ENCODE measurements at regions of chr17 and their contacts with region 1.

Region 1: GRCh38 chr17:28951991-28952975 is 965 bp upstream of the PHF12 start:
- DNase-seq: peak; percentile 89 to 100 (median 94)
- ATAC-seq: peak; percentile 71
- H3K4me3 ChIP-seq: peak overlapping the region; percentile 64
- H3K4me3 Mint-ChIP-seq: no peak overlapping the region
- H3K27ac ChIP-seq: peak overlapping the region; percentile 94 to 97
- H3K27ac Mint-ChIP-seq: no peak overlapping the region
- H3K4me1 ChIP-seq: peaks cover 34% of the 10 kb centered on the region
- H3K4me1 Mint-ChIP-seq: peaks cover 15% of the 10 kb centered on the region
- H3K27me3 ChIP-seq: no peaks in the 10 kb centered on the region
- H3K27me3 Mint-ChIP-seq: no peaks in the 10 kb centered on the region
- CTCF ChIP-seq: no peak

Region 2: GRCh38 chr17:28571255-28572122 is 380.8 kb before region 1 on chr17 and contains the start of gene PIGS:
- CTCF ChIA-PET with region 1: no interaction called
- POLR2A ChIA-PET with region 1: interaction called, 13 read pairs
- intact Hi-C with region 1: loop called in 1 of 2 experiments (anchors 10 kb)
- DNase-seq: peak; percentile 78 to 95 (median 88)
- ATAC-seq: peak; percentile 96
- H3K4me3 ChIP-seq: peak within 1 kb of the TSS; percentile 95
- H3K4me3 Mint-ChIP-seq: peak within 1 kb of the TSS; percentile 94
- H3K27ac ChIP-seq: peak within 1 kb of the TSS; percentile 66 to 85
- H3K27ac Mint-ChIP-seq: peak within 1 kb of the TSS; percentile 91
- H3K4me1 ChIP-seq: peaks cover 55% of the 10 kb centered on the region
- H3K4me1 Mint-ChIP-seq: peaks cover 65% of the 10 kb centered on the region
- H3K27me3 ChIP-seq: no peaks in the 10 kb centered on the region
- H3K27me3 Mint-ChIP-seq: no peaks in the 10 kb centered on the region
- CTCF ChIP-seq: no peak
- total RNA-seq, gene PIGS: 73.8 to 76.4 TPM

Region 3: GRCh38 chr17:28717578-28718333 is 234.5 kb before region 1 on chr17 and contains the start of gene RAB34:
- CTCF ChIA-PET with region 1: no interaction called
- POLR2A ChIA-PET with region 1: interaction called, 103 read pairs
- intact Hi-C with region 1: loop called in 1 of 2 experiments (anchors 2 kb)
- DNase-seq: peak in 6 of 14 experiments; percentile 12 to 60 (median 43)
- ATAC-seq: no peak
- H3K4me3 ChIP-seq: peak within 1 kb of the TSS; percentile 36
- H3K4me3 Mint-ChIP-seq: peak within 1 kb of the TSS; percentile 79
- H3K27ac ChIP-seq: no peak within 1 kb of the TSS
- H3K27ac Mint-ChIP-seq: peak within 1 kb of the TSS; percentile 79
- H3K4me1 ChIP-seq: peaks cover 55% of the 10 kb centered on the region
- H3K4me1 Mint-ChIP-seq: peaks cover 41% of the 10 kb centered on the region
- H3K27me3 ChIP-seq: peaks cover 17 to 21% of the 10 kb centered on the region in 2 experiments
- H3K27me3 Mint-ChIP-seq: peaks cover 35% of the 10 kb centered on the region
- CTCF ChIP-seq: no peak
- total RNA-seq, gene RAB34: 20.7 to 21.3 TPM

Region 4: GRCh38 chr17:28842282-28843012 is 109.8 kb before region 1 on chr17 and contains the start of gene FAM222B:
- CTCF ChIA-PET with region 1: interaction called, 5 read pairs
- POLR2A ChIA-PET with region 1: interaction called, 23 read pairs
- intact Hi-C with region 1: loop called in 1 of 2 experiments (anchors 5 kb)
- DNase-seq: peak; percentile 70 to 94 (median 83)
- ATAC-seq: peak; percentile 97
- H3K4me3 ChIP-seq: peak within 1 kb of the TSS; percentile 99
- H3K4me3 Mint-ChIP-seq: peak within 1 kb of the TSS; percentile 100
- H3K27ac ChIP-seq: peak within 1 kb of the TSS; percentile 78 to 80
- H3K27ac Mint-ChIP-seq: peak within 1 kb of the TSS; percentile 91
- H3K4me1 ChIP-seq: peaks cover 20% of the 10 kb centered on the region
- H3K4me1 Mint-ChIP-seq: peaks cover 27% of the 10 kb centered on the region
- H3K27me3 ChIP-seq: no peaks in the 10 kb centered on the region
- H3K27me3 Mint-ChIP-seq: no peaks in the 10 kb centered on the region
- CTCF ChIP-seq: no peak
- total RNA-seq, gene FAM222B: 17.3 to 17.5 TPM

Region 5: DNA sequence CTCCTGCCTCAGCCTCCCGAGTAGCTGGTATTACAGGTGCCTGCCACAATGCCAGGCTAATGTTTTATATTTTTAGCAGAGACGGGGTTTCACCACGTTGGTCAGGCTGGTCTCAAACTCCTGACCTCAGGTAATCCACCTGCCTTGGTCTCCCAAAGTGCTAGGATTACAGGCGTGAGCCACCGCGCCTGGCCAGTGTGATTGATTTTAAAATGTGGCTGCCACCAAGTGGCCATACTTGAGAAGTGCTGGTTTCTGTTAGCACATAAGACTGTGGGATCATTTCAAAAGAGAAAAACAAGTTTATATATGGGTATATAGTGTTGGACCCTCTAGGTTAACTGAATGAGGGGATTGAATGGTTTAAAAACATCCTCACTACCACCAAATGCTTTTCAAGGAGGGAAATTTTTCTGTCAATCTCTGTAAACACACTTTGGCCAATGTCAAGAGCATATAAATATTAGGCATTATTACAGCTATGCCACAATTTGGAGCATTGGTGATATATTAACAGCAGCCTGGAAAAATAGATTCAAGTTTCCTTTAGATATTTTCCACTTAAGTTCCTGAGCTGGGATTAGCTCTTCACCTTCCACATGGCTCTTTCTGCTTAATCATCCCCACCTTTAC is 35.9 kb before region 1 on chr17:
- CTCF ChIA-PET with region 1: interaction called, 4 read pairs
- POLR2A ChIA-PET with region 1: interaction called, 3 read pairs
- intact Hi-C with region 1: loop called in 1 of 2 experiments (anchors 5 kb)
- DNase-seq: peak in 12 of 14 experiments; percentile 22 to 72 (median 38)
- ATAC-seq: peak; percentile 86
- H3K4me3 ChIP-seq: no peak overlapping the region
- H3K4me3 Mint-ChIP-seq: no peak overlapping the region
- H3K27ac ChIP-seq: no peak overlapping the region
- H3K27ac Mint-ChIP-seq: peak overlapping the region; percentile 34
- H3K4me1 ChIP-seq: no peaks in the 10 kb centered on the region
- H3K4me1 Mint-ChIP-seq: peaks cover 8% of the 10 kb centered on the region
- H3K27me3 ChIP-seq: no peaks in the 10 kb centered on the region
- H3K27me3 Mint-ChIP-seq: no peaks in the 10 kb centered on the region
- CTCF ChIP-seq: peak; percentile 85

Region 6: DNA sequence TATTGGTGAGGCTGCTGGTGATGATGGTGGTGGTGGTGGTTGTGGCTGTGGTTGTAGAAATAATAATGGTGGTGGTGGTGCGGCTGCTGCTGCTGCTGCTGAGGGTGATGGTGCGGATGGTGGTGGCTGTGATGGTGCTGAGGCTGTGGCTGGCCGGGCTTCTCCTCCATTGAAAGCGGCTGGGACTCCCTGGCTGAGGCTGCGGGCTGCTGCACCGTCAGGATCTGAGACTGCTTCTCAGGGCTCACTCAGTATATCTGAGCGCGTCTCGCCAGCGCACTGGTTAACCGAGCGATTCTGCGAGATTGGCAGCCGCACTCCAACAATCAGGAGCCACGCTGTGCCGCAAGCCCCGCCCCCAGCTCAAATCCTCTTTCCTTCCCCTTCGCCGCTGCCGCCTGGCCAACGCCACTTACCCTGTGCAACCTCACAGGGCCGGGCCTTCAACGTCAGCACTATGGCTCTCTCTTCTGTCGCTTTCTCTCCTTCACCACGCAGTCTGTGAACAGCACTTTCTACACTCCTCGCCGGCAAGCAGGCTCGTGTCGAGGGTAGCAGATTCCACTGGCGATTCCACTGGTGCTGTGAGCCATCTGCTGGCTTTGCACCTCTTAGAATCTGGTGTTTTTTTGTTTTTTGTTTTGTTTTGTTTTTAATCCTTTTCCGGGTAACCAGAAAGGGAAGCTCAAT is 341.8 kb after region 1 on chr17 and contains the start of gene NUFIP2:
- CTCF ChIA-PET with region 1: no interaction called
- POLR2A ChIA-PET with region 1: interaction called, 18 read pairs
- intact Hi-C with region 1: loop called in 1 of 2 experiments (anchors 5 kb)
- DNase-seq: peak; percentile 95 to 100 (median 98)
- ATAC-seq: peak; percentile 84
- H3K4me3 ChIP-seq: peak within 1 kb of the TSS; percentile 98
- H3K4me3 Mint-ChIP-seq: peak within 1 kb of the TSS; percentile 99
- H3K27ac ChIP-seq: peak within 1 kb of the TSS; percentile 82 to 92
- H3K27ac Mint-ChIP-seq: peak within 1 kb of the TSS; percentile 96
- H3K4me1 ChIP-seq: peaks cover 20% of the 10 kb centered on the region
- H3K4me1 Mint-ChIP-seq: peaks cover 47% of the 10 kb centered on the region
- H3K27me3 ChIP-seq: no peaks in the 10 kb centered on the region
- H3K27me3 Mint-ChIP-seq: no peaks in the 10 kb centered on the region
- CTCF ChIP-seq: no peak
- total RNA-seq, gene NUFIP2: 78.4 to 82.2 TPM